Dorsolateral prefrontal cortex (tissue), 120 donors: ENCODE measurements at regions of chr11 and their contacts with region 1.

Region 1: GRCh38 chr11:22337596-22338485 is at the start of gene SLC17A6:
- DNase-seq: no peak
- H3K4me3 ChIP-seq: peak within 1 kb of the TSS in 54 of 59 donors; percentile 0 to 63 (median 34)
- H3K27ac ChIP-seq: peak within 1 kb of the TSS in 1 of 59 donors; percentile 7
- H3K27me3 ChIP-seq: peaks cover 0 to 72% (median 56%) of the 10 kb centered on the region in 45 donors
- CTCF ChIP-seq: no peak
- total RNA-seq, gene SLC17A6: 1.8 to 22.3 (median 8.9) TPM

Region 2: GRCh38 chr11:22106566-22106965 is 231.3 kb before region 1 on chr11:
- intact Hi-C with region 1: no loop called
- DNase-seq: no peak
- H3K4me3 ChIP-seq: no peak overlapping the region
- H3K27ac ChIP-seq: no peak overlapping the region
- H3K27me3 ChIP-seq: no peaks in the 10 kb centered on the region
- CTCF ChIP-seq: no peak

Region 3: GRCh38 chr11:22497474-22497873 is 159.6 kb after region 1 on chr11:
- intact Hi-C with region 1: no loop called
- DNase-seq: no peak
- H3K4me3 ChIP-seq: no peak overlapping the region
- H3K27ac ChIP-seq: no peak overlapping the region
- H3K27me3 ChIP-seq: no peaks in the 10 kb centered on the region
- CTCF ChIP-seq: no peak

Region 4: GRCh38 chr11:22829231-22830081 is 491.6 kb after region 1 on chr11 and contains the start of gene SVIP:
- intact Hi-C with region 1: loop called in 1 of 2 experiments (anchors 10 kb)
- DNase-seq: peak; percentile 88 to 98 (median 93)
- H3K4me3 ChIP-seq: peak within 1 kb of the TSS; percentile 64 to 100 (median 93)
- H3K27ac ChIP-seq: peak within 1 kb of the TSS; percentile 56 to 96 (median 88)
- H3K27me3 ChIP-seq: no peaks in the 10 kb centered on the region
- CTCF ChIP-seq: peak; percentile 54 to 89 (median 78)
- total RNA-seq, gene SVIP: 24.9 to 78.0 (median 51.0) TPM

Region 5: DNA sequence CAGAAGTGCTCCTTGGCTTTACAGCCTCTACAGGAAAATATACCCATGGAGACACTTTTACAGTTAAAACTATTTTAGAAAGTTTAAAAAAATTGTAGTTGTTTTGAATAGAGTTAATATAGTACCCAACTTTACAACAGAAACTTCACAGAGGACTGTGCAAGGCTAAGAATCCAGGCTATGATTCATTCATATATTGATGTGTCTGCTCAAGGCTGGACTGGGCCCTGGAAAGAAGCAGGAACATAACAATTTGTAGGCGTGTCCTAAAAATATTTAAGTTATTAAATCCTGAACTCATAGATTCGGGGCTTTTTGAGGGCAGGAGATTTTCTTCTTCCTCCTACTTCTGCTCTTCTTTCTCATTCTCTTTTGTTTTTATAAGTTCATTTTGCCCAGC is 814.0 kb after region 1 on chr11:
- intact Hi-C with region 1: no loop called
- DNase-seq: no peak
- H3K4me3 ChIP-seq: no peak overlapping the region
- H3K27ac ChIP-seq: no peak overlapping the region
- H3K27me3 ChIP-seq: no peaks in the 10 kb centered on the region
- CTCF ChIP-seq: no peak

Region 6: DNA sequence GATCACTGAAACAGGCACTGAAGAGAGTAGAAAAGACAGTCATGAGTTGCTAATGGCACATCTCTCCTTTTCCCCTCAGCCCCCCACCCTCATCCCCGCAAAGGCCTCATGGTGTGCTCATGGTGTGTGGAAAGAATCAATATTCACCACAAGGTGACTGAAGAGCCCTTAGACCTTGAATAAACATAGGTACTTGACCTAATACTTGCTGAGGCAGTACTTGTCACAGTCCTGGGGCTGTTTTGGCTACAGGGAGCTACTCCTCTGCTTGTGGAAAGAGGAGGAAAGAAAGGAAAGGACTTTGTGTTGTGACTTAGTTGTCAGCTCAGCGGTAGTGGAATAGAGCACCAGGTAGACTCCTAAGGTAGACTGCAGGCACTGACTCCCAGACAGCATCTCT is 1060.2 kb after region 1 on chr11:
- intact Hi-C with region 1: no loop called
- DNase-seq: no peak
- H3K4me3 ChIP-seq: no peak overlapping the region
- H3K27ac ChIP-seq: no peak overlapping the region
- H3K27me3 ChIP-seq: no peaks in the 10 kb centered on the region
- CTCF ChIP-seq: no peak